ENCODE measurements at regions of chr9 and their contacts with region 1.

Region 1: GRCh38 chr9:135951889-135952663 is 9.1 kb downstream of the UBAC1 start:
- DNase-seq: no peak
- H3K4me3 ChIP-seq: no peak overlapping the region
- H3K27ac ChIP-seq: no peak overlapping the region
- H3K4me1 ChIP-seq: no peaks in the 10 kb centered on the region
- H3K27me3 ChIP-seq: no peaks in the 10 kb centered on the region
- CTCF ChIP-seq: no peak
- EP300 ChIP-seq: no peak
- POLR2A ChIP-seq: no peak

Region 2: DNA sequence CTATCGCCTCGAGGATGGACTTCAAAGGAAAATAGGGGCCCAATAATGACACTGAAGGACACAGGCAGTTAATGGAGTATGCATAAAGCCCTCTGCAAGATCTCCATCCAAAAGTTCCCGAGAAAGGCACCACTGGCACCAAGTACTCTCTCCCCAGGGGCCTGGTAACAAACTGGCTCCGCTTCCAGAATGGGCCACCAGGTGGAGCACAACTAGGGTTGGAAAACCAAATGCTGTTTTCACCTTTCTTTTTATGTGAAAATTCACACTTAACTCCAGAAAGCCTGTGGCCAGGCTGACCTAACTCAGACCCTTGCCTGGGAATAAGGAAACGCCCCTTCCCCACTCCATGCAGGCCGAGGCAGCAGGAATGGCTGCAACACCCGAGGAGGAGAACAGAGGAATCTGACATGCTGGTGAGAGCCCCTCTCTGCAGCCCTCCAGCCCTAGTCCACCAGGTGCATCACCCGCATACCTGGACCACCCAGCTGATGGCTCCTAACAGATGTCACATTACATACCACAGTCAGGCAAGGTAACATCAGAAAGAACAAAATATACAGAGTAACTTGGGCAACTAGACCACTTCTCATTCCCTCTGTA is 87.5 kb before region 1 on chr9:
- intact Hi-C with region 1: loop called in 1 of 4 experiments (anchors 10 kb)
- DNase-seq: peak; percentile 42 to 75 (median 71)
- H3K4me3 ChIP-seq: no peak overlapping the region
- H3K27ac ChIP-seq: no peak overlapping the region
- H3K4me1 ChIP-seq: peaks cover 2% of the 10 kb centered on the region
- H3K27me3 ChIP-seq: no peaks in the 10 kb centered on the region
- CTCF ChIP-seq: peak in 2 of 3 donors; percentile 37 to 56
- EP300 ChIP-seq: no peak
- POLR2A ChIP-seq: no peak

Measured in ovary (tissue), 10 donors.